PC-9 (cell line): ENCODE measurements at regions of chr3 and their contacts with region 1.

Region 1: GRCh38 chr3:136658946-136659682 is 93.1 kb downstream of the STAG1 start:
- DNase-seq: no peak
- H3K4me3 ChIP-seq: no peak overlapping the region
- H3K27ac ChIP-seq: no peak overlapping the region
- H3K4me1 ChIP-seq: no peaks in the 10 kb centered on the region
- H3K27me3 ChIP-seq: no peaks in the 10 kb centered on the region
- CTCF ChIP-seq: no peak

Region 2: DNA sequence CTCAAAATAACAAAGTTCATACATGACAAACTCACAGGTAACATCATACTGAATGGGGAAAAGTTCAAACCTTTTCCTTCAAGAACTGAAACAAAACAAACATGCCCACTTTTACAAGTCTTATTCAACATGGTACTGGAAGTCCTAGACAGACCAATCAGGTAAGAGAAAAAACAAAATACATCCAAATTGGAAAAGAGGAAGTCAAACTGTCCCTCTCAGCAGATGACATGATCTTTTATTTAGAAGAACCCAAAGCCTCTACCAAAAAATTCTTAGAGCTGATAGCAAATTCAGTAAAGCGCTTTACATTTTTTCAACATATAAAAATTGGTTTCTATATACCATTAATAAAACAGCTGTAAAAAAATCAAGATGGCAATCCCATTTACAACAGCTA is 126.3 kb before region 1 on chr3:
- CTCF ChIA-PET with region 1: no interaction called
- POLR2A ChIA-PET with region 1: no interaction called
- intact Hi-C with region 1: no loop called
- DNase-seq: no peak
- H3K4me3 ChIP-seq: no peak overlapping the region
- H3K27ac ChIP-seq: no peak overlapping the region
- H3K4me1 ChIP-seq: no peaks in the 10 kb centered on the region
- H3K27me3 ChIP-seq: no peaks in the 10 kb centered on the region
- CTCF ChIP-seq: no peak

Region 3: DNA sequence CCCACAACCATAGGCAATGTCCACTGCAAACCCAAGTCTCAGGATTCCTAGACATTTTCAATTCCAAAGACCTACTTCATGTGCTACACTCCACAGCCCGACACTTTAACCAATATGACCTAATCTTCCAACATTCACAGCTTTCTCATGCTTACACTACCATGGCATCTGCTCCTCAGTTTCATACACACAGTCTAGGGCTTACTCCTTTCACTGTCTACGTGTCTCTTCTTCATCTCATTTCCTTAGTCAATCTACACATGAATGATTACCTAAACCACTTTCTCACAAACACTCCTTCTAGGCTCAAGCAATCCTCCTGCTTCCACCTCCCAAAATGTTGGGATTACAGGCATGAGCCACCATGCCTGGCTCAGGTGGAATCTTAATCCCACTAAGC is 13.2 kb before region 1 on chr3:
- CTCF ChIA-PET with region 1: no interaction called
- POLR2A ChIA-PET with region 1: interaction called, 11 read pairs
- intact Hi-C with region 1: no loop called
- DNase-seq: no peak
- H3K4me3 ChIP-seq: no peak overlapping the region
- H3K27ac ChIP-seq: no peak overlapping the region
- H3K4me1 ChIP-seq: no peaks in the 10 kb centered on the region
- H3K27me3 ChIP-seq: no peaks in the 10 kb centered on the region
- CTCF ChIP-seq: no peak

Region 4: GRCh38 chr3:137438561-137438960 is 779.4 kb after region 1 on chr3:
- CTCF ChIA-PET with region 1: no interaction called
- POLR2A ChIA-PET with region 1: no interaction called
- intact Hi-C with region 1: no loop called
- DNase-seq: no peak
- H3K4me3 ChIP-seq: no peak overlapping the region
- H3K27ac ChIP-seq: no peak overlapping the region
- H3K4me1 ChIP-seq: no peaks in the 10 kb centered on the region
- H3K27me3 ChIP-seq: no peaks in the 10 kb centered on the region
- CTCF ChIP-seq: no peak